H1 (cell line): ENCODE measurements at regions of chr17 and their contacts with region 1.

Region 1: GRCh38 chr17:79393358-79394202 is 217.3 kb downstream of the RBFOX3 start:
- DNase-seq: peak; percentile 57 to 99
- H3K4me3 ChIP-seq: no peak overlapping the region
- H3K27ac ChIP-seq: no peak overlapping the region
- H3K4me1 ChIP-seq: no peaks in the 10 kb centered on the region; a peak in 2 of 7 replicates
- H3K27me3 ChIP-seq: peaks cover 2 to 16% (median 7%) of the 10 kb centered on the region in 4 experiments
- CTCF ChIP-seq: peak; percentile 98 to 100 (median 100)
- EP300 ChIP-seq: no peak
- POLR2A ChIP-seq: no peak
- RAD21 ChIP-seq: peak; percentile 98 to 99

Region 2: GRCh38 chr17:79087428-79088143 is 306.0 kb before region 1 on chr17:
- CTCF ChIA-PET with region 1: interaction called, 291 read pairs
- POLR2A ChIA-PET with region 1: no interaction called
- DNase-seq: peak in 1 of 2 experiments; percentile 97
- H3K4me3 ChIP-seq: no peak overlapping the region
- H3K27ac ChIP-seq: no peak overlapping the region
- H3K4me1 ChIP-seq: no peaks in the 10 kb centered on the region
- H3K27me3 ChIP-seq: no peaks in the 10 kb centered on the region
- CTCF ChIP-seq: peak; percentile 91 to 98 (median 96)
- EP300 ChIP-seq: no peak
- POLR2A ChIP-seq: no peak
- RAD21 ChIP-seq: peak; percentile 89 to 93

Region 3: DNA sequence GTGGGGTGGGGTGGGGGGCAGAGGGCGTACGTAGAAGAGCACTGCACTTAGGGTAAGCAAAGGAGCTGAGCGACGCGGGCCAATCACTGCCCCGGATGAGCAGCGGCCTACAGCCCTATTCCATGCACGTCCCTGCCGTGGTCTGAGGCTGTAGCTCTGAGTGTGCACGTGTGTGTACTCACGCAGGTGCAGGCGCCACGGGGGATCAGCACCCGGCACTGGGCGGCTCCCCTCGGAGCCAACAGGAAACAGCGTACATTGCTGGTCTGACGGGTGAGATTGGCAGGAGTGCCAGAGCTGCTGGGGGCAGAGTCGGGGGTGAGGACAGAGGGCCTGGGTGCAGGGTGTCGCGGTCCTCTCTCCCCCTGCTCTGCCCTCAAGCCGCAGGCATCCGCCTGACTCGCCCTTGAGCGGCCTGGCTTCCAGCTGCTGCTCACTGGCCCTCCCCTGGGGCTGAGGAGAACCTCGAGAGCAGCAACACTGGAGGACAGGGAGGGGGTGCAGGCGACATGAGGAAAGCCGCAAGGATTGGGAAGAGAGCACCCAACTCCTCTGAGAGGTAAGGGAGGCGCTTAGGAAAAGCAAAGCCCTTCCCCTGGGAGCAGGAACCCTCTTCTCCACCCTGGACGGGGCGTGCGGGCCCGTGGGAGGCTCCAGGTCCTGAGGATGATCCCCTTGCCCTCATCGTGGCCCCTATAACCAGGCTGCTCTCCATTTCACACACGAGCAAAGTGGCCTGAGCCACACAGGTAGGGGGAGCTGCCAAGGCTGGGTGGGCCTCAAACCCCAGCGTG is 261.1 kb before region 1 on chr17:
- CTCF ChIA-PET with region 1: interaction called, 20 read pairs
- POLR2A ChIA-PET with region 1: no interaction called
- DNase-seq: no peak
- H3K4me3 ChIP-seq: no peak overlapping the region
- H3K27ac ChIP-seq: no peak overlapping the region
- H3K4me1 ChIP-seq: no peaks in the 10 kb centered on the region; a peak in 1 of 7 replicates
- H3K27me3 ChIP-seq: no peaks in the 10 kb centered on the region
- CTCF ChIP-seq: no peak
- EP300 ChIP-seq: no peak
- POLR2A ChIP-seq: no peak
- RAD21 ChIP-seq: no peak

Region 4: GRCh38 chr17:79201536-79202227 is 191.9 kb before region 1 on chr17:
- CTCF ChIA-PET with region 1: interaction called, 20 read pairs
- POLR2A ChIA-PET with region 1: no interaction called
- DNase-seq: no peak
- H3K4me3 ChIP-seq: no peak overlapping the region
- H3K27ac ChIP-seq: no peak overlapping the region
- H3K4me1 ChIP-seq: peaks cover 0 to 14% (median 9%) of the 10 kb centered on the region in 4 experiments; a peak in 6 of 7 replicates
- H3K27me3 ChIP-seq: no peaks in the 10 kb centered on the region
- CTCF ChIP-seq: no peak
- EP300 ChIP-seq: no peak
- POLR2A ChIP-seq: no peak
- RAD21 ChIP-seq: no peak

Region 5: GRCh38 chr17:79305768-79306423 is 87.7 kb before region 1 on chr17:
- CTCF ChIA-PET with region 1: interaction called, 14 read pairs
- POLR2A ChIA-PET with region 1: no interaction called
- DNase-seq: no peak
- H3K4me3 ChIP-seq: no peak overlapping the region
- H3K27ac ChIP-seq: no peak overlapping the region
- H3K4me1 ChIP-seq: peaks cover 0 to 3% (median 0%) of the 10 kb centered on the region in 4 experiments; a peak in 1 of 7 replicates
- H3K27me3 ChIP-seq: no peaks in the 10 kb centered on the region
- CTCF ChIP-seq: no peak
- EP300 ChIP-seq: no peak
- POLR2A ChIP-seq: no peak
- RAD21 ChIP-seq: no peak

Region 6: GRCh38 chr17:79406316-79406715 is 12.7 kb after region 1 on chr17:
- CTCF ChIA-PET with region 1: interaction called, 44 read pairs
- POLR2A ChIA-PET with region 1: interaction called, 3 read pairs
- DNase-seq: no peak
- H3K4me3 ChIP-seq: no peak overlapping the region
- H3K27ac ChIP-seq: no peak overlapping the region
- H3K4me1 ChIP-seq: peaks cover 0 to 9% (median 2%) of the 10 kb centered on the region in 4 experiments; a peak in 4 of 7 replicates
- H3K27me3 ChIP-seq: peaks cover 0 to 4% (median 1%) of the 10 kb centered on the region in 4 experiments; a peak in 3 of 7 replicates
- CTCF ChIP-seq: no peak
- EP300 ChIP-seq: no peak
- POLR2A ChIP-seq: no peak
- RAD21 ChIP-seq: no peak

Region 7: DNA sequence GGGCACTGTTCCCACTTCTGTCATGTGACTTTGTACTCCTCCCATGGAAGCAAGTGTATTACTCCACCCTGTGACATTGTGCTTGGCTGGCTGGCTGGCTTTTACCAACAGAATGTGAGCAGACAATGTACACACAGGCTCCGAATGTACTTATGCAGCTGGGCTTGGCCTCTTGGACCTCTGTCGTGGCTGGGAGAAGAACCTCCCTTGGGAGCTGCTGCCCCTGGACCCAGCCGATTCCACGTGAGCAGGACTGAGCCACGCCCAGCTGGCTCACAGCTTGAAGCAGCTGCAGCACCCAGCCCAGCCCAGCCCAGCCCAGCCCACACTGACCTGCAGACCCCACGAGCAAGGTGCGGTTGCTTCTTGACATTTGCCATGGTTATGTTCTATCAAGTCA is 39.8 kb after region 1 on chr17:
- CTCF ChIA-PET with region 1: no interaction called
- POLR2A ChIA-PET with region 1: no interaction called
- DNase-seq: no peak
- H3K4me3 ChIP-seq: no peak overlapping the region
- H3K27ac ChIP-seq: no peak overlapping the region
- H3K4me1 ChIP-seq: no peaks in the 10 kb centered on the region
- H3K27me3 ChIP-seq: no peaks in the 10 kb centered on the region
- CTCF ChIP-seq: no peak
- EP300 ChIP-seq: no peak
- POLR2A ChIP-seq: no peak
- RAD21 ChIP-seq: no peak

Region 8: GRCh38 chr17:79473111-79473875 is 79.7 kb after region 1 on chr17:
- CTCF ChIA-PET with region 1: no interaction called
- POLR2A ChIA-PET with region 1: no interaction called
- DNase-seq: no peak
- H3K4me3 ChIP-seq: no peak overlapping the region
- H3K27ac ChIP-seq: no peak overlapping the region
- H3K4me1 ChIP-seq: no peaks in the 10 kb centered on the region
- H3K27me3 ChIP-seq: peaks cover 0 to 2% (median 0%) of the 10 kb centered on the region in 4 experiments; a peak in 1 of 7 replicates
- CTCF ChIP-seq: no peak
- EP300 ChIP-seq: no peak
- POLR2A ChIP-seq: no peak
- RAD21 ChIP-seq: no peak